ENCODE measurements at regions of chr7 and their contacts with region 1.

Region 1: DNA sequence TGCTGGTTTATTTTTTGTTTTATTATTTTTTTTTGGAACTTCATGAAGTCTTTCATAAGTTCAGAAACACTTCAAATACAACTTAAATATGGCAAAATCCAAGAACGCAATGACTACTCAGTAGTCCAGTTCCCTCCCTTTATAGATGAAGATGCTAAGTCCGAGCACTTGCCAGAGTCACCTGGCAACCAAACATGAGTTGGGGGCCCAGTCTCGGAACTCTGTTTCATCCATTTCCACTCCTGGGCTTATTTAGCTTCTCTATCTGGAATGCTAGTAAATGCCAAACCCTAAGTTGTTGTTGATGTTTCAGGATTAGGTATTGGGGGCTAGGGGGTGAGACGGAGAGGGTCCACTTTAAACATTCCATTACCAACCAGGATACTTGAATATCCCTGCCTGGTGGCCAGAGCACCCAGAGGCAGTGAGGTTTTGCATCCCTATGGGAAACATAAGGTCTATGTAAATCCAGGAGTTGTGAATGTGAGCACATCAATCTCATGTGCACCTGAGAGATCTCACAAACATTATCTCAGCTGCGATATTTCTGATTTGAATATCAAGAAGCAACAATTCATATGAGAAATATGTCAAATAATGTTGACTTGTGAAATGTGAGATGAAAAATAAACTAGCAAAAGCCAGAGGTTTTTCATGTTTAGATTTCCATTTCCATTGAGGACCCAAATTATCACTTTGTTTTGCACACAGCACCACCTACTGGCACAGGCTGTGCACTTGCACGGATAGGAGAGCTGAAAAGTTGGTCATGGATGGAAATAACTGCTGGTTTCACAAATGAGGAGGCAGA is 129.3 kb downstream of the PKD1L1 start:
- DNase-seq: peak; percentile 54 to 62
- ATAC-seq: peak in 6 of 8 donors; percentile 65 to 81 (median 71)
- H3K4me3 ChIP-seq: no peak overlapping the region
- H3K27ac ChIP-seq: no peak overlapping the region
- H3K4me1 ChIP-seq: peaks cover 0 to 20% (median 14%) of the 10 kb centered on the region in 9 donors
- H3K27me3 ChIP-seq: no peaks in the 10 kb centered on the region
- CTCF ChIP-seq: peak; percentile 71 to 99 (median 93)

Region 2: GRCh38 chr7:47379629-47380324 is 439.2 kb before region 1 on chr7:
- intact Hi-C with region 1: loop called in 1 of 10 experiments (anchors 5 kb)
- DNase-seq: peak; percentile 79 to 85
- ATAC-seq: peak; percentile 85 to 94 (median 92)
- H3K4me3 ChIP-seq: peak overlapping the region in 4 of 10 donors; percentile 5 to 24 (median 12)
- H3K27ac ChIP-seq: peak overlapping the region; percentile 53 to 90 (median 77)
- H3K4me1 ChIP-seq: peaks cover 5 to 40% (median 31%) of the 10 kb centered on the region in 9 donors
- H3K27me3 ChIP-seq: no peaks in the 10 kb centered on the region
- CTCF ChIP-seq: no peak

Region 3: GRCh38 chr7:47435889-47436312 is 383.1 kb before region 1 on chr7:
- intact Hi-C with region 1: loop called (anchors 1 to 10 kb)
- DNase-seq: peak; percentile 68 to 74
- ATAC-seq: peak; percentile 74 to 91 (median 88)
- H3K4me3 ChIP-seq: no peak overlapping the region
- H3K27ac ChIP-seq: no peak overlapping the region
- H3K4me1 ChIP-seq: peaks cover 0 to 10% (median 0%) of the 10 kb centered on the region in 9 donors
- H3K27me3 ChIP-seq: no peaks in the 10 kb centered on the region
- CTCF ChIP-seq: peak; percentile 46 to 87 (median 78)

Region 4: DNA sequence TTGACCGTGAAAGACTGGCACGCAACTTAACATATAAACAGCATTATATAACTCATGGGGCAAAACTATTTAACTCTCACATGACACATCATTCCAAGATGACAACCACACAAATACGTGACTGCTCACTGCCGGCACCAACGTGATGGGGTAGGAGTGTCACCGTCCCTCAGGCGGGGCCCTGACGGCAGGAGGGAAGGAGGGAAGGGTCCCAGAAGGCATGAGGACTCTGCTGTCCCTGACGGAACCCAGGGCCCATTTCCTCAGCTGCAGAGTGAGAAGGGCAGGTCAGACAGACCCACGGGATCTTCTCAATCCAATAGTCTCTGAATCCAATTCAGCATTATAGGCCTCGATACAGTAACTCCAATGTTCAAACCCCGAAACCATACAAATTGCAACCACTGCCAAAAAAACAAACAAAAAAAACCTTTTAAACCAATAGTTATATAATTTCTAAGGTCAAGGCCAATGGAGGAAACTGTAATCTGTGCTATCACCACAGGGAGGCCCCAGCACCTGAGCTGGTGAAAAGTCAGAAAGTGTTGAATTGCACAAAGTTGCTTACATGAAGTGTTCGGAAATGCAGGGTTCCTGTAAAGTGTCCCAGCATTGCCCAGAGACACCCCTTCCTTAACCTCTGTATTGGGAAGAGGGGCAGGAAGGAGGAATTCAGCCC is 374.5 kb before region 1 on chr7:
- intact Hi-C with region 1: loop called in 8 of 10 experiments (anchors 5 to 10 kb)
- DNase-seq: no peak
- ATAC-seq: peak in 2 of 8 donors; percentile 16 to 40
- H3K4me3 ChIP-seq: no peak overlapping the region
- H3K27ac ChIP-seq: no peak overlapping the region
- H3K4me1 ChIP-seq: peaks cover 4 to 48% (median 23%) of the 10 kb centered on the region in 9 donors
- H3K27me3 ChIP-seq: no peaks in the 10 kb centered on the region
- CTCF ChIP-seq: peak; percentile 13 to 66 (median 50)

Measured in heart right ventricle (tissue), 16 donors.